HepG2 (cell line): ENCODE measurements at regions of chr9 and their contacts with region 1.

Region 1: DNA sequence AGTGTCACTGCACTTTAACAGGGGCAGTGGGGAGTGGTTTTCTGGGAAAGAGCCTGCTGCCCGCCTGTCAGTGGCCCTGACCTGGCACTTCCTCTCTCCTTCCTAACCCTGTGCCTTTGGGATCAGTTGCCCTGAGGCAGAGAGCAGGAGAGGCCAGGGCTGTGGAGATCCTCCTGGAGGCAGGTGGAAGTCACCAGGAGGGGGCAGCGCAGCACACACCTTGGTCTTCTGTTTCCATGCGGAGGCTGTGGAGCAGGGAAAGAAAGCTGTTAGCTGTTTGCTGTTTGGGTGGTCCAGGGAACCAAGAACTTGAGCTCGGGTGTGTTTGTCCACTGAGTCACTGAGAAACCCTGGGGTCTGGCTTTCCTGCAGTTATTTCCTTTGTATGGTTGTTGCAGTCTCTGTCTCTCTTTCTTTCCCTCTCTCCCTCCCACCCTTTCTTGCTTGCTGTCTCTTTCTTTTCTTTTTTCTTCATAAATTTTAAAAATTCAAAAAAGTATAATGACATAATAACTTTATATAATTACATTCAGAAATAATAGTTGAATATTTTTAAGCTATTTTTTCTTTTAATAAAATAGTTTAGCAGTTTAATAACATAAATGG is 28.1 kb downstream of the NTRK2 start:
- DNase-seq: peak; percentile 22
- ATAC-seq: peak; percentile 94
- H3K4me3 ChIP-seq: no peak overlapping the region
- H3K27ac ChIP-seq: no peak overlapping the region
- H3K4me1 ChIP-seq: no peaks in the 10 kb centered on the region
- H3K27me3 ChIP-seq: no peaks in the 10 kb centered on the region; a peak in 1 of 5 replicates
- CTCF ChIP-seq: peak; percentile 79
- EP300 ChIP-seq: no peak
- POLR2A ChIP-seq: no peak
- RAD21 ChIP-seq: peak; percentile 46

Region 2: DNA sequence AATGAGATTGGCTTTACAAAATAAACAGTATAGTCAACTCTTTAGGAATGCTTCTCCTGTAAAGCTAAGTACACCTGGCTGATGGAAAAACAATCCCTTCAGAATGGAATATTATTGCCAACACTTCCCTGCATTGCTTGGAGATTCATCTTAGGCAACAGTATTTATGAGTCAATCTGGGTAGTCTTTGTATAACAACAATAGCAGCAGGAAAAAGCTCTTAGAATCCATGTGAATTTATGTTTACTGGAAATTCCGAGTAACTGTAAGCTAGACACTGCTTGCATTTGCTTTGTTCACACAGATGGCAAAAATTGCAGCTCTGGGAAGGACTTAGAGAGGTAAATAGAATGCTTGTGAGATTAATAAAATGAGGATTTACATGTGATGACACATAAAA is 129.8 kb before region 1 on chr9:
- CTCF ChIA-PET with region 1: no interaction called
- POLR2A ChIA-PET with region 1: no interaction called
- in situ Hi-C with region 1: no loop called
- intact Hi-C with region 1: no loop called
- DNase-seq: no peak
- ATAC-seq: no peak
- H3K4me3 ChIP-seq: no peak overlapping the region
- H3K27ac ChIP-seq: no peak overlapping the region
- H3K4me1 ChIP-seq: no peaks in the 10 kb centered on the region
- H3K27me3 ChIP-seq: no peaks in the 10 kb centered on the region
- CTCF ChIP-seq: no peak
- EP300 ChIP-seq: no peak
- POLR2A ChIP-seq: no peak
- RAD21 ChIP-seq: no peak

Region 3: GRCh38 chr9:84681516-84682285 is 15.9 kb before region 1 on chr9:
- CTCF ChIA-PET with region 1: no interaction called
- POLR2A ChIA-PET with region 1: no interaction called
- in situ Hi-C with region 1: no loop called
- intact Hi-C with region 1: no loop called
- DNase-seq: no peak
- ATAC-seq: no peak
- H3K4me3 ChIP-seq: no peak overlapping the region
- H3K27ac ChIP-seq: no peak overlapping the region
- H3K4me1 ChIP-seq: no peaks in the 10 kb centered on the region
- H3K27me3 ChIP-seq: peaks cover 0 to 3% of the 10 kb centered on the region in 2 experiments; a peak in 2 of 5 replicates
- CTCF ChIP-seq: no peak
- EP300 ChIP-seq: no peak
- POLR2A ChIP-seq: no peak
- RAD21 ChIP-seq: no peak

Region 4: DNA sequence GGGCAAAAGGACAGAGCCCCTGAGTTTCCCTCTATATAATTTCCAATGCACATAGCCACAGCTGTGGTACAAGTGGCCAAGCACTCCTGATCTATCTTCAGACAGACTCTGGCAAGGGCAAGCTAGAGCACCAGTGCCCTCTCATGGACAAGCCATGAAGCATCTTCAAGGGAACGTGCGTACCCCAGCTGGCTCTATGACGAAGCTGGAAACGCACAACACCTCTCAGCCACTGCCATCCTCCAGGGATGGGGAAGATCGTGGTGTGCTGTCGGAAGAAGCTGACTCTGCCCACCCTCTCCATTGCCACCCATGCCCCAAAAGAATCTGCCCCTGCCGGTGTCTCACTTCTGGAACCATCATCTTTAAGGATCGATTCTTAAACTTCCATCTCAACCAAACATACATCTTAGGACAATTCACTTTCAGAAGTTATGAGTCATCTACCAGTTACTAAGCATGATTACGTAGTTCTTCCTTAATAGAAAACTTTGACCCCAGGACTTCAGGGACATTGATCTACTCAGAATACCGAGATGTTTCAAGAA is 561.3 kb after region 1 on chr9:
- CTCF ChIA-PET with region 1: no interaction called
- POLR2A ChIA-PET with region 1: no interaction called
- in situ Hi-C with region 1: loop called (anchors 25 kb)
- intact Hi-C with region 1: loop called (anchors 1 kb)
- DNase-seq: peak; percentile 39
- ATAC-seq: peak; percentile 95
- H3K4me3 ChIP-seq: no peak overlapping the region
- H3K27ac ChIP-seq: no peak overlapping the region
- H3K4me1 ChIP-seq: no peaks in the 10 kb centered on the region
- H3K27me3 ChIP-seq: no peaks in the 10 kb centered on the region
- CTCF ChIP-seq: peak; percentile 76
- EP300 ChIP-seq: no peak
- POLR2A ChIP-seq: no peak
- RAD21 ChIP-seq: peak; percentile 35